ENCODE measurements at regions of chr17 and their contacts with region 1.

Region 1: GRCh38 chr17:77372444-77373298 is 231.9 kb downstream of the SEC14L1 start:
- DNase-seq: peak; percentile 74
- ATAC-seq: peak; percentile 64
- H3K4me3 ChIP-seq: peak overlapping the region; percentile 9 to 91 (median 79)
- H3K4me3 Mint-ChIP-seq: peak overlapping the region; percentile 74
- H3K27ac ChIP-seq: no peak overlapping the region
- H3K27ac Mint-ChIP-seq: peak overlapping the region; percentile 32
- H3K4me1 ChIP-seq: peaks cover 28 to 48% of the 10 kb centered on the region in 2 donors
- H3K4me1 Mint-ChIP-seq: peaks cover 36% of the 10 kb centered on the region
- H3K27me3 ChIP-seq: no peaks in the 10 kb centered on the region
- H3K27me3 Mint-ChIP-seq: no peaks in the 10 kb centered on the region
- CTCF ChIP-seq: no peak

Region 2: DNA sequence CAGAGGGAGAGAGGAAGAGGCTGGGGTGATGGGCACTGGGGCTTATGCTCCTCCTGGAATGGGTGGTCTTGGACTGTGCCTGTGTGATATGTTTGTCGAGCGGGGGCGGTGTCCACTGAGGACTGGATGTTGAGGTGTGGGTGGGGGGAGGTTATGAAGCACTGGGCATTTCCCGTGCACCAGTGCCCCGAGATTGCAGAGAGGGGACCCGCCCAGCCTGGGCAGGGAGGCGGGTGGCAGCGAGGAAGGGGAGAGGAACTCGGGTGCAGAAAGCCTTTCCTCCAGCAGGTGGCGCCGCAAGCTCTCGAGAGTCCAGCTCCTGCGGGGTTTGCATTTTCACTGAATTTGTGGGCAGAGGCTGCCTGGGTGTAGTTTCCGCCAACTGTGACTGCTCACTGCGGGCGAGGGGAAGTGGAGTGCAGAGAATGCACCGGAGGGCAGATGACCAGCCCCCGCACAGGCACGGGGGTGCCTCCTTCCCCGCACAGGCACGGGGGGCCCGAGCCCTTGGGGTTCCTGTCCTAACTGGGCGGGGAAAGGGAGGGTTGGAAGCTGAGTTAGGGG is 41.3 kb before region 1 on chr17:
- CTCF ChIA-PET with region 1: interaction called, 15 read pairs
- POLR2A ChIA-PET with region 1: interaction called, 3 read pairs
- intact Hi-C with region 1: loop called (anchors 1 kb)
- DNase-seq: peak; percentile 94
- ATAC-seq: peak; percentile 89
- H3K4me3 ChIP-seq: peak overlapping the region in 4 of 5 experiments; percentile 21 to 65 (median 36)
- H3K4me3 Mint-ChIP-seq: peak overlapping the region; percentile 82
- H3K27ac ChIP-seq: peak overlapping the region; percentile 67 to 77
- H3K27ac Mint-ChIP-seq: peak overlapping the region; percentile 85
- H3K4me1 ChIP-seq: peaks cover 41 to 66% of the 10 kb centered on the region in 2 donors
- H3K4me1 Mint-ChIP-seq: peaks cover 53% of the 10 kb centered on the region
- H3K27me3 ChIP-seq: no peaks in the 10 kb centered on the region
- H3K27me3 Mint-ChIP-seq: no peaks in the 10 kb centered on the region
- CTCF ChIP-seq: peak; percentile 93

Region 3: DNA sequence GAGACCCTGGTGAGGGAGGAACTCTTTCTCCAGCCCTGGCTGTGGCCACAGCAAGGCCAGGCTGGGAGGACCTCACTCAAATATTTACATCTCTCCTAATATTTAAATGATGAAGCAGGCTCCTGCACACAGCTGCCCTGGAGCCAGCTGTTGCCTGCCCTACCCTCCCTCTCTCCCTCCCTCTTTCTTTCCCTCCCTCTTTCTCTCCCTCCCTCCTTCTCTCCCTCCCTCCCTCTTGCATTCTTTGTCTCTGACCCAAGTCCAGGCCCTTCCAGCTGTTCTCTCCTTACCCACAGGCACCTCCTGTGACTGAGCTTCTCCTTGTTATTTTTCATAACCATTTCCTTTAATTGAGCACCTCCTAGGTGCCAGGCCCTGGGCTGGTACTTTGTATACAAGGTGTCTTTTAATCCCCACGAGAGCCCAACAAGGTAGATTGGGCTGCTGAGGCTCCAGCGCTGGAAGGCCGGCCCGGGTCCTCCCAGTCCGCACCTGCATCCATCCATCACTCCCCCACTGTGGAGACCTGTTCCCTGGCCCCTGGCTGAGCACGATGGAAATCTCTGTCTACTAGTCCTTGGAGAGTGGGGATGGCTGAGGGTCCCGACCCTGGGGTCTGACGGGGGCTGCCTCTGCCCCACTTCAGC is 10.4 kb after region 1 on chr17:
- CTCF ChIA-PET with region 1: interaction called, 3 read pairs
- POLR2A ChIA-PET with region 1: interaction called, 15 read pairs
- intact Hi-C with region 1: no loop called
- DNase-seq: no peak
- ATAC-seq: peak; percentile 24
- H3K4me3 ChIP-seq: no peak overlapping the region
- H3K4me3 Mint-ChIP-seq: no peak overlapping the region
- H3K27ac ChIP-seq: no peak overlapping the region
- H3K27ac Mint-ChIP-seq: no peak overlapping the region
- H3K4me1 ChIP-seq: peaks cover 8 to 36% of the 10 kb centered on the region in 2 donors
- H3K4me1 Mint-ChIP-seq: peaks cover 21% of the 10 kb centered on the region
- H3K27me3 ChIP-seq: no peaks in the 10 kb centered on the region
- H3K27me3 Mint-ChIP-seq: no peaks in the 10 kb centered on the region
- CTCF ChIP-seq: no peak

Region 4: DNA sequence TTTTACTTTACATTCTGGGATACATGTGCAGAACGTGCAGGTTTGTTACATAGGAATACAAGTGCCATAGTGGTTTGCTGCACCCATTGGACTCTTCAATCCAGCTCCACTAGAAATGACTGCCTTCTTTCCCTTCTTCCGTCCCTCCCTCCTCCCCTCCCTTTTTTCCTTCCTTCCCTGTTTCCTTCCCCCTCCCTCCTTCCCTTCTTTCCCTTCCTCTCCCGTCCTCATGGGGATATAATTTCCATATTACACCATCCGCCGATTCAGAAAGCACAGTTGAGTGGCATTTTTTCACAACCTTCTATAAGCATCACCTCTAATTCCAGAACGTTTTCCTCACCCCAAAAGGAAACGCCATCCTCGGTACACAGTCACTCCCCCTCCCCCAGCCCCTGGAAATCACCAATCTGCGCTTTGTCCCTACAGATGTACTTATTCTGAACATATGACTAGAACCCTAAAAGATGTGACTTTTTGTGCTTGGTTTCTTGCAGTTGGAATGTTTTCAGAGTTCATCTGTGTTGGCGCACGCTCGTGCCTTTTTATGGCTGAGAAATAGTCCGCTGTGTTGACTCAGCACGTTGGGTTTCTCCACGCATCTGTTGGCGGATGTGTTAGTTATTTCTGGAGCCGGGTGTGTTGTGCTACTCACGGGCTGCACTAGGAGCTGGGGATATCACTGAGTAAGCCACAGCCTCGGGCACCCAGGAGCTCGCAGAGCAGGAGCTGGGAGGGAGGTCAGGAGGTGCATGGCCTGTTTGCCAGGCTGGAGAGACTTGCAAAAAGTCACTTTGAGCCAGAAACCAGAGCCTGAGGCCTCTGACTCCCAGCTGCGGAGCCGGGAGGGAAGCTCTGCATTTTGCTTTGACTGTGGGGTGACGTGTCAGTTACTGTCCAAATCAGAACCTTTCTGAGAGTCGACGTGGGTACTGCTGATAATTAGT is 104.5 kb after region 1 on chr17:
- CTCF ChIA-PET with region 1: no interaction called
- POLR2A ChIA-PET with region 1: no interaction called
- intact Hi-C with region 1: no loop called
- DNase-seq: no peak
- ATAC-seq: no peak
- H3K4me3 ChIP-seq: no peak overlapping the region
- H3K4me3 Mint-ChIP-seq: no peak overlapping the region
- H3K27ac ChIP-seq: peak overlapping the region in 1 of 2 donors; percentile 89
- H3K27ac Mint-ChIP-seq: peak overlapping the region; percentile 48
- H3K4me1 ChIP-seq: peaks cover 46 to 83% of the 10 kb centered on the region in 2 donors
- H3K4me1 Mint-ChIP-seq: peaks cover 76% of the 10 kb centered on the region
- H3K27me3 ChIP-seq: no peaks in the 10 kb centered on the region
- H3K27me3 Mint-ChIP-seq: no peaks in the 10 kb centered on the region
- CTCF ChIP-seq: no peak